Motor neuron (in vitro differentiated cells): ENCODE measurements at regions of chr10 and their contacts with region 1.

Region 1: GRCh38 chr10:132637477-132638129 is 100.0 kb downstream of the INPP5A start:
- ATAC-seq: peak; percentile 56 to 96 (median 88)
- H3K4me3 ChIP-seq: no peak overlapping the region
- H3K27ac ChIP-seq: no peak overlapping the region
- H3K4me1 ChIP-seq: peaks cover 0 to 4% of the 10 kb centered on the region in 2 donors

Region 2: GRCh38 chr10:132354356-132355094 is 283.1 kb before region 1 on chr10:
- in situ Hi-C with region 1: no loop called
- ATAC-seq: peak in 6 of 8 experiments; percentile 9 to 58 (median 38)
- H3K4me3 ChIP-seq: no peak overlapping the region
- H3K27ac ChIP-seq: no peak overlapping the region
- H3K4me1 ChIP-seq: peaks cover 0 to 13% of the 10 kb centered on the region in 2 donors

Region 3: DNA sequence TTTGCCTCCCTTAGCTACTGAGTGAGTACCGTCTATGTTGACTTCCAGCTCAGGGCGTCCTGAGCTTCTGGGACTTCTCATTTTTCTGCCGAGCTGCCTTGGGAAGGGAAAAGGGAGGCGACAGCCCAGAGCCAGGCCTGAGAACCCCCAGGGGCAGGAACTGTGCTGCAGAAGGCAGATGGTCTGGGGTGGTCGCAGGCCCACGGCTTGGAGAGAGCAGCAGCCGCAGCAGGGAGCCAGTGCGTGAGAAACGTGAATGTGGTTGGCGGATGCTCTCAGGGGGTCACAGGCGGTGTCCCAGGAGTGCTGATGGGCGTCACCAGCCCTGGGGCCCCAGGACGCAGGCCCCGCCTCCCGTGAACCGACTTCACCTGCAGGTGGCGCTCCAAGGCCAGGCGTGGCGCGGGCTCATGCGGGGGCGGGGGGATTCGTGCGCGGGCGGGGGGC is 249.8 kb before region 1 on chr10:
- in situ Hi-C with region 1: loop called in 1 of 9 experiments (anchors 25 kb)
- ATAC-seq: peak; percentile 62 to 91 (median 85)
- H3K4me3 ChIP-seq: no peak overlapping the region
- H3K27ac ChIP-seq: peak overlapping the region; percentile 20 to 76
- H3K4me1 ChIP-seq: peaks cover 12 to 20% of the 10 kb centered on the region in 2 donors

Region 4: GRCh38 chr10:132452631-132453469 is 184.8 kb before region 1 on chr10:
- in situ Hi-C with region 1: loop called in 7 of 9 experiments (anchors 5 to 25 kb)
- ATAC-seq: peak; percentile 61 to 85 (median 79)
- H3K4me3 ChIP-seq: peak overlapping the region in 1 of 5 donors; percentile 6
- H3K27ac ChIP-seq: no peak overlapping the region
- H3K4me1 ChIP-seq: peaks cover 5 to 34% of the 10 kb centered on the region in 2 donors

Region 5: DNA sequence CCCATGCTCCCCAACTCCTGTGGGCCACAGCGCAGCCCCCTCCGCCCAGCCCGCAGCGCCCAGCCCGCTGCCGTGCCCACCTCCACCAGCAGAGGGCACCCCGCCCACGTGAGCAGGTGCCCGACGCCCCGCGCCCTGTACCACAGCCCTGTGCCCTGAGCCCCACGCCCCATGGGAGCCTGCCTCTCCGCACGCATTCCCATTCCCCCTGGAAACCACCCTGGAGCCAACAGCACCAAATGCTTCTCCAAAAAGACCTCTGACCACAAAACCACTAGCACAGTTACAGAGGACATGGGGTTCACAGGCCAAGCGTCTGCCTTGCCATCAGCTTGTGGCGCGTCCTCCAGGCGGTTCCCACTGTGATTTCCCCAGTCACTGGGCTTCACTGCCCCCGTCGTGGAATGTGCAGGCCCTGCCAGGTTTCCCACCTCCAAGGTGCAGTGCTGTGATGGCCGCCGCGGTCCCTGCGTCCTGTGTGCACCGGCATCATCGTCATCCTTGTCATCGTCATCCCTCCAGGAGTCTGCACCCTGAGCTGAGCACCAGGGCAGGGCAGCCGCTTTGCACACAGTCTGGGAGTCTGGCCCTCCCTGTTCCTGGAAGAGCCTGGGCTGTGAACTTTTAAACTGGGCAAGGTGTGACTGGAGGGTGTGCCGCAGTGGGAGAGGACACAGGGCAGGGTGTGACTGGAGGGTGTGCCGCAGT is 178.9 kb before region 1 on chr10:
- in situ Hi-C with region 1: loop called (anchors 5 to 25 kb)
- ATAC-seq: peak; percentile 68 to 95 (median 72)
- H3K4me3 ChIP-seq: no peak overlapping the region
- H3K27ac ChIP-seq: no peak overlapping the region
- H3K4me1 ChIP-seq: peaks cover 0 to 3% of the 10 kb centered on the region in 2 donors

Region 6: DNA sequence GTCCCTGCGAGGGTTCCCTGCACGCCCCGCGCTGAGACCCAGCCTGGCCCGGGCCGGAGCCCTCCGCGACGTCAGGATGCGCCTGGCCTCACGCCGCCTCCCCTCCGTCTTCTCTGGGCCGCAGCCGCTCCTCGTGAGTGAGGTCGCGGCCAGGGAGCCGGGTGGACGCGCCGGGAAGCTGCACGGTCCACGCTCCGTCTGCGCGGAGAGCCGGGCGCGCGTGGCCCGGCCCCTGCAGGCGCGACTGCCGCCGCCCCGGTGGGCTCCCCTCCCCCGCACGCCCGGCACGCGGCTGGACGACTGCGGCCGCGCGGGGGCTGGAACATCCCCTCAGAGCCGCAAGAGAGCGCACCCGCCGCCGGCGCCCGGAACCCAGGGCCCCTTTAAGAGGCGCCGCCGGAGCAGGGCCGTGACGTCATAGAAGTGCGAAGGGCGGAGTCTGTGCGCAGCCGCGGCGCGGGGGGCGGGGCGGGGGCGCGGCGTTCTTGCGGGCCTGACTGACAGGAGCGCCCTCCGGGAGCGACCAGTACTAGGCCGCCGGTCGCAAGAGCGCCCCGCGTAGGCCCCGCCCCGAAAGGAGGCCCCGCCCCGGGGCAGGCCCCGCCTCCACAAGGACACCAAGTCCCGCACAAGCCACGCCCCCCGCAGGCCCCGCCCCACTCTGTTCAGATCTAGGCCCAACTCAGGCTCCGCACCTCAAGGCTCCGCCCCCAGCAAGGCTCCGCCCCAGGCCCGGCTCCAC is 100.5 kb before region 1 on chr10:
- in situ Hi-C with region 1: loop called in 1 of 9 experiments (anchors 25 kb)
- ATAC-seq: peak; percentile 71 to 87 (median 84)
- H3K4me3 ChIP-seq: peak overlapping the region; percentile 44 to 62 (median 50)
- H3K27ac ChIP-seq: peak overlapping the region; percentile 73 to 78
- H3K4me1 ChIP-seq: peaks cover 45 to 49% of the 10 kb centered on the region in 2 donors